Activated naive CD4-positive, alpha-beta T cell treated with anti-CD3 and anti-CD28 coated beads for 36 hours (primary cell): ENCODE measurements at regions of chr9 and their contacts with region 1.

Region 1: GRCh38 chr9:75855509-75855908 is 35.0 kb upstream of the PCSK5 start:
- DNase-seq: peak; percentile 27
- H3K4me3 Mint-ChIP-seq: no peak overlapping the region
- H3K27ac Mint-ChIP-seq: no peak overlapping the region
- H3K4me1 Mint-ChIP-seq: no peaks in the 10 kb centered on the region
- H3K27me3 Mint-ChIP-seq: no peaks in the 10 kb centered on the region

Region 2: GRCh38 chr9:75200892-75201470 is 654.5 kb before region 1 on chr9:
- CTCF ChIA-PET with region 1: no interaction called
- intact Hi-C with region 1: loop called (anchors 2 kb)
- DNase-seq: no peak
- H3K4me3 Mint-ChIP-seq: no peak overlapping the region
- H3K27ac Mint-ChIP-seq: no peak overlapping the region
- H3K4me1 Mint-ChIP-seq: peaks cover 4% of the 10 kb centered on the region
- H3K27me3 Mint-ChIP-seq: no peaks in the 10 kb centered on the region

Region 3: DNA sequence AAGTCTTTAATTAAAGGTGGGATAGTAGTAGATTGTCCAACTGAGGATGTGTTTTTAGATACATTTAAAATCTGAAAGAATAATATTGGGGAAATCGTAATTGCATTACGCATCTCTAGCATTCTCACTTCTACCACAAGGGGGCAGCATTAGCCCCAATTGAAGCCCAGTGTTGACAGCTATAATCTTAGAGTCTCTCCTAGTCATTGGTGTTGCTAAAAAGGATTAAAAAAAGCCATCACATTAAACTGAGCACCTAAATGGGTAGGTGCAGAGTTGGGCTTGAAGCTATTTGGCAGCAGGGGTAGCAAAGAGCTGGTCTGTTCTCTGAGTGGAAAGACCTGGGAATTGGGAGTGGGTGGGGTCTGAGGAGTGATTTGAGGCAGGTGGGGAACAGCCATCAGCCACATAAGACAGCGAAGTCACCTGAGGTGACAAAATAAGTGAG is 590.0 kb before region 1 on chr9:
- CTCF ChIA-PET with region 1: no interaction called
- intact Hi-C with region 1: loop called (anchors 5 kb)
- DNase-seq: peak; percentile 71
- H3K4me3 Mint-ChIP-seq: no peak overlapping the region
- H3K27ac Mint-ChIP-seq: no peak overlapping the region
- H3K4me1 Mint-ChIP-seq: no peaks in the 10 kb centered on the region
- H3K27me3 Mint-ChIP-seq: no peaks in the 10 kb centered on the region